HCT116 (cell line): ENCODE measurements at regions of chr6 and their contacts with region 1.

Region 1: DNA sequence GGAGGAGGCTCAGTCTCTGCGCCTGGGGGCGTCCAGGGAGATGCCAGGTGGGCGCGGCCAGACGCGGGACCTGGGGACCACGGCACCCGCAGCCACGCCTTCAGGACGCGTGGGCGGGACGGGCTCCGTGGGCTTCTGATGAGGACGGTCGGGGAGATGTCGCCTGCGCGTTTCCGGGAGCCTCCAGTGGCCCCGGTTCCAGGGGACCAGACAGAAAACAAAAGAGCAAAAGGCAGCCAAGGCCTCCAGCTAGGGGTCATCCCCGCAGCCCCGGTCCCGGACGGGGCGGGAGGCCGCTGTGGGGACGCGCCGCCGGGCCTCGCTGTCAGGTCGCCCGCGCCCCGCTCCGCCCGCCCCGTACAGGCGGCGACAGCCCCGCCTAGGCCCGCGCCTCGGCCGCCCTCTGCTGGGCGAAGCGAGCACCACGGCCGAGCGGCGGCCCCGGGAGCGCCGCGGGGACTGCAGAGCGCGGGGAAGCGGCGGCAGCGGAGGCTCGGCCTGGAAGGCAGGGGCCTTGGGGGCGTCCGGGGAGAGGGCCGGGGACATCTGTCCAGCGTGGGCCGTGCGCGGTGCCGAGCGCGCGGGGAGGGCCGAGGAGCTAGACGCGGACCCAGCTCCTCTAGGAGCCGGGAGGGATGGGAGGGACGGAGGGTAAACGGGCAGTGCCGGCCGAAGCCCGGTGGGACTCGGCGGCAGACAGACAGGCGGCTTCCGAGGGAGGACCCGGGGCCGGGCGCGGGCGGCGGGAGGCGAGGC is 48.7 kb downstream of the TMEM242 start:
- DNase-seq: peak; percentile 31
- ATAC-seq: peak; percentile 87
- H3K4me3 ChIP-seq: peak overlapping the region; percentile 52 to 67
- H3K27ac ChIP-seq: peak overlapping the region; percentile 51; the same call in 1 of the 2 replicates
- H3K4me1 ChIP-seq: peaks cover 10 to 26% of the 10 kb centered on the region in 2 experiments; a peak in 3 of 4 replicates
- H3K27me3 ChIP-seq: no peaks in the 10 kb centered on the region
- CTCF ChIP-seq: peak; percentile 24 to 62 (median 44); a peak in 5 of 6 replicates
- POLR2A ChIP-seq: no peak
- RAD21 ChIP-seq: peak; percentile 64

Region 2: DNA sequence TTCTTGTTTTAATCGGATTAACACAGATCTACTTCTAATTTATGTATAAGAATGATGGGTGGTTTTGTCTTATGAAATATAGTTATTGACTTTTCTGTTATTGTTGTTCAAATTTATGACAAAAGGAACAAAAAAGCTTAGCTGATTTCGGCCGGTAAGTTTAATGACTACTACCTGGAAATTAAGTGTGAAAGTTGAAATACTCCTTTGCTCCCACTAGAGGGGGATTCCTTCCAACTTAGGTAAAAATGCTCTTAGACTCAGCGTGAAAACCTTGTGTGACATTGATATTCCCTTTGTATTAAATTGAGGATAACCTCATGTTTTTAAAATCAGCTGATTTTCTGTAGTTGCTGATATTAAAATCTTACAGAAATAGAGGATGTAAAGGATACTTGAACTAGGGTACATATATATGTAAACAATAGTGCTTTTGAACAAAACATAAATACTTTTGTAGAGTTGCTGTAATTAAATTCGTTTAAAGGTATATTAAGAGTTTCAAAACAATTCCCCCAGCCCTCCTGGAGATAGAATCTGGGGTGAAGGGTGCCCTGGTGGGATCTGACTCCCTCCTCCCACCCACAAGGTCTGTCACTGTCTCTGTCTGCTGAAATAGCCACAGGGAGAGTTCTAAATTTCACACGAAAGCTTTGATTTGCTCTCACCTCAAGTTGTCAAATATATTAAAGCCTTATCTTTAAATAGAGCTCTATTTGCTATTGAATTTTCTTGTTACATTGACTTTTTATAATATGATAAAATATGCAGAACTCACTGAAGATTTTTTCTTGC is 240.0 kb before region 1 on chr6:
- CTCF ChIA-PET with region 1: interaction called, 4 read pairs
- POLR2A ChIA-PET with region 1: no interaction called
- RAD21 ChIA-PET with region 1: no interaction called
- intact Hi-C with region 1: loop called (anchors 5 kb)
- DNase-seq: peak; percentile 36
- ATAC-seq: peak; percentile 73
- H3K4me3 ChIP-seq: no peak overlapping the region
- H3K27ac ChIP-seq: no peak overlapping the region
- H3K4me1 ChIP-seq: 0 out of 4 replicates have a peak, but pooled peaks cover 0 to 3% of the 10 kb centered on the region in 2 experiments
- H3K27me3 ChIP-seq: no peaks in the 10 kb centered on the region
- CTCF ChIP-seq: peak; percentile 60 to 61 (median 61); a peak in 5 of 6 replicates
- POLR2A ChIP-seq: no peak
- RAD21 ChIP-seq: peak; percentile 70

Region 3: GRCh38 chr6:157148391-157149323 is 126.0 kb before region 1 on chr6:
- CTCF ChIA-PET with region 1: no interaction called
- POLR2A ChIA-PET with region 1: no interaction called
- RAD21 ChIA-PET with region 1: no interaction called
- intact Hi-C with region 1: loop called (anchors 10 kb)
- DNase-seq: peak; percentile 75
- ATAC-seq: peak; percentile 95
- H3K4me3 ChIP-seq: peak overlapping the region in 1 of 2 experiments; percentile 41; a peak in 2 of 4 replicates
- H3K27ac ChIP-seq: peak overlapping the region; percentile 63
- H3K4me1 ChIP-seq: peaks cover 19 to 20% of the 10 kb centered on the region in 2 experiments
- H3K27me3 ChIP-seq: no peaks in the 10 kb centered on the region
- CTCF ChIP-seq: no peak
- POLR2A ChIP-seq: no peak
- RAD21 ChIP-seq: peak; percentile 10; the same call in 1 of the 2 replicates

Region 4: GRCh38 chr6:157227202-157228166 is 47.2 kb before region 1 on chr6:
- CTCF ChIA-PET with region 1: no interaction called
- POLR2A ChIA-PET with region 1: no interaction called
- RAD21 ChIA-PET with region 1: no interaction called
- intact Hi-C with region 1: loop called (anchors 1 kb)
- DNase-seq: no peak
- ATAC-seq: peak; percentile 75
- H3K4me3 ChIP-seq: no peak overlapping the region
- H3K27ac ChIP-seq: no peak overlapping the region
- H3K4me1 ChIP-seq: peaks cover 3 to 9% of the 10 kb centered on the region in 2 experiments; a peak in 1 of 4 replicates
- H3K27me3 ChIP-seq: no peaks in the 10 kb centered on the region
- CTCF ChIP-seq: peak; percentile 39 to 56 (median 43); a peak in 5 of 6 replicates
- POLR2A ChIP-seq: no peak
- RAD21 ChIP-seq: peak; percentile 56